Stomach (tissue), 19 donors: ENCODE measurements at regions of chr2 and their contacts with region 1.

Region 1: GRCh38 chr2:31318361-31319336 is 84.7 kb downstream of the EHD3 start:
- DNase-seq: no peak
- H3K4me3 ChIP-seq: no peak overlapping the region
- H3K27ac ChIP-seq: peak overlapping the region; percentile 46 to 76 (median 60)
- H3K4me1 ChIP-seq: peaks cover 0 to 28% (median 17%) of the 10 kb centered on the region in 4 donors
- H3K27me3 ChIP-seq: no peaks in the 10 kb centered on the region
- CTCF ChIP-seq: no peak
- EP300 ChIP-seq: no peak
- POLR2A ChIP-seq: no peak

Region 2: DNA sequence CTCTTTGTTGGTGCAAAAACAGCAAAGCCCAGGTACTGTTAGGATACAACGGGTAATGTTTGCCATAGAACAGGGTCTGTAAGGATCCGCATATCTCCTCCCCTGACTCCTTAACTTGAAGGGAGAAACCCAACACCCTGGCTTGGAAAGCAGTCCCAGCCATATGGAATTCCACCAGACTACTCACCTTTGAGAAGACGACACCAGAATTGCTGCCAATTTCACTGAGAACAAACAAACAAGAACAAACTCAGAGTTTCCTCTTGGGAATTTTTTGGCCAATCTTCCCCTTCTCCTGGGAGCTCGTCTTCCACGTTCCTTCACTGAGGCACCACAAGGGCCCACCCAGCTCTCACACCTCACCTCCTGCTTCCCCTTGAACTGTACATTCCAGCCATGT is 130.5 kb before region 1 on chr2:
- intact Hi-C with region 1: no loop called
- DNase-seq: no peak
- H3K4me3 ChIP-seq: no peak overlapping the region
- H3K27ac ChIP-seq: no peak overlapping the region
- H3K4me1 ChIP-seq: no peaks in the 10 kb centered on the region
- H3K27me3 ChIP-seq: peaks cover 0 to 6% (median 0%) of the 10 kb centered on the region in 3 donors
- CTCF ChIP-seq: no peak
- EP300 ChIP-seq: no peak
- POLR2A ChIP-seq: no peak

Region 3: GRCh38 chr2:31233741-31234682 is 84.6 kb before region 1 on chr2 and contains the start of gene EHD3:
- intact Hi-C with region 1: loop called (anchors 10 kb)
- DNase-seq: peak; percentile 83 to 95
- H3K4me3 ChIP-seq: peak within 1 kb of the TSS; percentile 56 to 75 (median 64)
- H3K27ac ChIP-seq: peak within 1 kb of the TSS; percentile 6 to 69 (median 59)
- H3K4me1 ChIP-seq: peaks cover 5 to 32% (median 21%) of the 10 kb centered on the region in 4 donors
- H3K27me3 ChIP-seq: peaks cover 0 to 8% (median 0%) of the 10 kb centered on the region in 3 donors
- CTCF ChIP-seq: peak in 5 of 7 experiments; percentile 13 to 47 (median 25)
- EP300 ChIP-seq: no peak
- POLR2A ChIP-seq: no peak
- total RNA-seq, gene EHD3: 0.45 to 4.0 (median 1.7) TPM